MCF 10A (cell line): ENCODE measurements at regions of chr7 and their contacts with region 1.

Region 1: GRCh38 chr7:48088559-48089045 is 463 bp upstream of the UPP1 start:
- DNase-seq: peak; percentile 96
- H3K4me3 Mint-ChIP-seq: peak overlapping the region; percentile 83
- H3K27ac Mint-ChIP-seq: peak overlapping the region; percentile 88
- H3K4me1 Mint-ChIP-seq: peaks cover 53% of the 10 kb centered on the region
- H3K27me3 Mint-ChIP-seq: no peaks in the 10 kb centered on the region
- CTCF ChIP-seq: no peak

Region 2: GRCh38 chr7:47979145-47979831 is 109.3 kb before region 1 on chr7 and contains the start of gene HUS1:
- CTCF ChIA-PET with region 1: interaction called, 6 read pairs
- POLR2A ChIA-PET with region 1: interaction called, 10 read pairs
- intact Hi-C with region 1: loop called (anchors 1 kb)
- DNase-seq: peak; percentile 86
- H3K4me3 Mint-ChIP-seq: peak within 1 kb of the TSS; percentile 81
- H3K27ac Mint-ChIP-seq: peak within 1 kb of the TSS; percentile 96
- H3K4me1 Mint-ChIP-seq: peaks cover 16% of the 10 kb centered on the region
- H3K27me3 Mint-ChIP-seq: no peaks in the 10 kb centered on the region
- CTCF ChIP-seq: no peak
- total RNA-seq, gene HUS1: 39.9 and 42.8 TPM in 2 replicates

Region 3: GRCh38 chr7:47991741-47992311 is 96.8 kb before region 1 on chr7:
- CTCF ChIA-PET with region 1: interaction called, 6 read pairs
- POLR2A ChIA-PET with region 1: interaction called, 8 read pairs
- intact Hi-C with region 1: loop called (anchors 1 kb)
- DNase-seq: peak; percentile 66
- H3K4me3 Mint-ChIP-seq: no peak overlapping the region
- H3K27ac Mint-ChIP-seq: no peak overlapping the region
- H3K4me1 Mint-ChIP-seq: no peaks in the 10 kb centered on the region
- H3K27me3 Mint-ChIP-seq: no peaks in the 10 kb centered on the region
- CTCF ChIP-seq: peak; percentile 48

Region 4: DNA sequence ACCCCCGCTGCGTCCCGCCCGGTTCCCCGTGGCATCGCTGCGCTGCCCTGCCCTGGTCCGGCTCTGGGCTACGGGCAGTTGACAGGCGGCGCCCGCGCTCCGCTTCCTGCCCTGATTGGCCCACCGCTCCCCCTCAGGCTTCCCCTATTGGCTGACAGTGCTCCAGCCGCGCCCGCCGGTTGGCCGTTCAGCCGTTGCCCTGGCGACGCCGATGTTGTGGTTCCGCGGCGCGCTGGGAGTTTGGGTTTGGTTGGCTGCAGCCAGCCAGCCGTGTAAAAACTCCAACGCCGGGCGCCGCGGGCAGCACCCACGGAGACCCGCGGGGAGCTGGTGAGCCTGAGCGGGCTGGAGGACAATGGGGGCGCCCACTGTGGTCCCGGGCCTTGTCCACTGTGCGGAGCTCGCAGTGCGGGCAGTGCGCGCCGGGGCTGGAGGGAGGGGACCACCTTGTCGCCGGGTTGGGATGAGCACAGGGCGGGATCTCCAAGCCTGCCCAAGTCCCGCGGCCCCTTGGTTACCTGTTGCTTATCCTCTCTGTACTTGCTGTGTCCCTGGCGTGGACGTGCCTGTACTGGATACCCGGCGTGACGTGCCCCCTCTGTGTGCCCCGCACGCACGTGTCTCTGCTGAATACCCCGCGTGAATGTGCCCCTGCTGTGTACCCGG is 53.2 kb before region 1 on chr7 and contains the start of gene C7orf57:
- CTCF ChIA-PET with region 1: interaction called, 4 read pairs
- POLR2A ChIA-PET with region 1: interaction called, 4 read pairs
- intact Hi-C with region 1: loop called (anchors 1 kb)
- DNase-seq: peak; percentile 82
- H3K4me3 Mint-ChIP-seq: peak within 1 kb of the TSS; percentile 74
- H3K27ac Mint-ChIP-seq: peak within 1 kb of the TSS; percentile 50
- H3K4me1 Mint-ChIP-seq: no peaks in the 10 kb centered on the region
- H3K27me3 Mint-ChIP-seq: no peaks in the 10 kb centered on the region
- CTCF ChIP-seq: no peak
- total RNA-seq, gene C7orf57: 0.37 and 0.52 TPM in 2 replicates